ENCODE measurements at regions of chr1 and their contacts with region 1.

Region 1: GRCh38 chr1:203520315-203520714 is 26.4 kb downstream of the OPTC start:
- DNase-seq: peak in 1 of 14 experiments; percentile 43
- ATAC-seq: no peak
- H3K4me3 ChIP-seq: no peak overlapping the region
- H3K4me3 Mint-ChIP-seq: no peak overlapping the region
- H3K27ac ChIP-seq: no peak overlapping the region
- H3K27ac Mint-ChIP-seq: no peak overlapping the region
- H3K4me1 ChIP-seq: no peaks in the 10 kb centered on the region
- H3K4me1 Mint-ChIP-seq: peaks cover 7% of the 10 kb centered on the region
- H3K27me3 ChIP-seq: no peaks in the 10 kb centered on the region
- H3K27me3 Mint-ChIP-seq: no peaks in the 10 kb centered on the region
- CTCF ChIP-seq: no peak

Region 2: GRCh38 chr1:203480525-203481084 is 39.7 kb before region 1 on chr1:
- CTCF ChIA-PET with region 1: no interaction called
- POLR2A ChIA-PET with region 1: no interaction called
- intact Hi-C with region 1: no loop called
- DNase-seq: peak in 11 of 14 experiments; percentile 33 to 69 (median 54)
- ATAC-seq: peak; percentile 39
- H3K4me3 ChIP-seq: no peak overlapping the region
- H3K4me3 Mint-ChIP-seq: no peak overlapping the region
- H3K27ac ChIP-seq: no peak overlapping the region
- H3K27ac Mint-ChIP-seq: no peak overlapping the region
- H3K4me1 ChIP-seq: peaks cover 8% of the 10 kb centered on the region
- H3K4me1 Mint-ChIP-seq: no peaks in the 10 kb centered on the region
- H3K27me3 ChIP-seq: peaks cover 0 to 3% of the 10 kb centered on the region in 2 experiments
- H3K27me3 Mint-ChIP-seq: peaks cover 9% of the 10 kb centered on the region
- CTCF ChIP-seq: no peak

Region 3: GRCh38 chr1:203572134-203572625 is 51.9 kb after region 1 on chr1:
- CTCF ChIA-PET with region 1: no interaction called
- POLR2A ChIA-PET with region 1: no interaction called
- intact Hi-C with region 1: loop called in 1 of 2 experiments (anchors 10 kb)
- DNase-seq: no peak
- ATAC-seq: no peak
- H3K4me3 ChIP-seq: no peak overlapping the region
- H3K4me3 Mint-ChIP-seq: no peak overlapping the region
- H3K27ac ChIP-seq: no peak overlapping the region
- H3K27ac Mint-ChIP-seq: no peak overlapping the region
- H3K4me1 ChIP-seq: no peaks in the 10 kb centered on the region
- H3K4me1 Mint-ChIP-seq: no peaks in the 10 kb centered on the region
- H3K27me3 ChIP-seq: no peaks in the 10 kb centered on the region
- H3K27me3 Mint-ChIP-seq: no peaks in the 10 kb centered on the region
- CTCF ChIP-seq: no peak

Region 4: DNA sequence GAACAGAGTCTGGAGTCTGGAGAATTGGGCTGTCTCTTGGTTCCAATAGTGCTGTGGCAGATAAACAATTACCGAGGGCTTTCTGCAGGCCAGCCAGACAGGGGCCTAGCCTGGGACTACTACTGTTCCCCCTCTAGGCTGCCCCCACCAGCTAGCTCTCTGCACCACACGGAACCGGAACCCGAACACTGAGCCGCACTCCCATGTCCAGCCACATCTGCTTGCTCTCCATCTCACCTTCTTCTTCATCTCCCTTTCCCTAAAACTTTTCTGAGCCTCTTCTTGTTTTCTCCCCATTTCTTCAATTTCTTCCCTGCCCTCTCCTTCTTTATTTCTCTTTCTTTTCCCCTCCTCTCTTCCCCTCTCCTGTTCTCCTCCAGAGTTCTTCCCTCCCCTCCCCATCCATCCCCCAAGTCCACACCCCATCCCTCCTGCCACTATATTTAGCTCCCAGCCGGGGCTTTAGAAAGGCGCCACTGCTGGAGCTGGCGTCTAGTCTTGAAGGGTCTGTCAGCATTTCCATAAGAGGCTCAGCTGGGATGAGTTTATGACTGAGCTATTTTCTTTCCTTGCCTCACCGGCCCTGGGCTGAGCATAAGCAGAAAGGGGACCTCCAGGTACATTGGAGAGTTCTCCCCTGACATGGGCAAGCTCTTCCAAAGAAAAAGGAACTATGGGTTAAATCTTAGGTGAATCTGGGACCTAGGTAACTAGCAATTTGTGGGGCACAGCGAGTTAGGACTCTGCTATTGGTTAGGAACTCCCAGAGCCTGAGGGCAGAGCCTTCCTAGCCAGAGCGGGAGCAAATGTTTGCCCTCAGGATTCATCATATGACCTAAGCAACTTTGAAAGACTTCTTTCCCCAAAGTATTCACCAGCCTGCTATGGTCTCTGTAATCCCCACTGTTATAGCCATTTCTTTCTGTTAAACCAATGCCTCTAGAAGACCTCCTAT is 80.7 kb after region 1 on chr1:
- CTCF ChIA-PET with region 1: no interaction called
- POLR2A ChIA-PET with region 1: no interaction called
- intact Hi-C with region 1: loop called in 1 of 2 experiments (anchors 5 kb)
- DNase-seq: no peak
- ATAC-seq: no peak
- H3K4me3 ChIP-seq: no peak overlapping the region
- H3K4me3 Mint-ChIP-seq: no peak overlapping the region
- H3K27ac ChIP-seq: no peak overlapping the region
- H3K27ac Mint-ChIP-seq: no peak overlapping the region
- H3K4me1 ChIP-seq: peaks cover 20% of the 10 kb centered on the region
- H3K4me1 Mint-ChIP-seq: peaks cover 18% of the 10 kb centered on the region
- H3K27me3 ChIP-seq: no peaks in the 10 kb centered on the region
- H3K27me3 Mint-ChIP-seq: no peaks in the 10 kb centered on the region
- CTCF ChIP-seq: no peak